GM12878 (cell line): ENCODE measurements at regions of chr5 and their contacts with region 1.

Region 1: GRCh38 chr5:157917899-157918809 is 59.2 kb upstream of the CLINT1 start:
- DNase-seq: no peak
- ATAC-seq: peak; percentile 92
- H3K4me3 ChIP-seq: no peak overlapping the region
- H3K27ac ChIP-seq: no peak overlapping the region
- H3K4me1 ChIP-seq: no peaks in the 10 kb centered on the region; the same call in 1 of the 2 replicates
- H3K27me3 ChIP-seq: no peaks in the 10 kb centered on the region
- CTCF ChIP-seq: peak; percentile 64 to 71 (median 65)
- EP300 ChIP-seq: no peak
- POLR2A ChIP-seq: no peak
- RAD21 ChIP-seq: peak; percentile 81

Region 2: DNA sequence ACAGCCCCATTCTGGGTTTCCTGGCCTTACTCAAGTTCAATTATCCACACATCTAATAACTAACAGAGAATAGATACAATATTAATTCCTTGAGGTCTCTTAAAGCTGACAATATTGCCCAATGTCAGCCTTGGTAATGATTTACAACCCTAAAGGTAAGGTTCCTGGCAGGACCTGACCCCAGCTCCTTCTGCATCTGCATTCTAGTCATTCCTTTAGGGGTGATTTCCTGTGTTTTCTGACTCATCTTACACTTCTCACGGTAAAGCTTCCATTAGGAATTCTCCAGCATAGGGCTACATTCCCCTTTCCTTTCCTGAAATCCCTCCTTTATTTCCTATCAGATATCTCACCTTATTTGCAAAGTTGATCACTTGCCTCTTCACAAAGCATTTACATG is 868.5 kb before region 1 on chr5:
- CTCF ChIA-PET with region 1: no interaction called
- POLR2A ChIA-PET with region 1: no interaction called
- RAD21 ChIA-PET with region 1: no interaction called
- SMC1A ChIA-PET with region 1: no interaction called
- in situ Hi-C with region 1: no loop called
- intact Hi-C with region 1: no loop called
- DNase-seq: no peak
- ATAC-seq: no peak
- H3K4me3 ChIP-seq: no peak overlapping the region
- H3K27ac ChIP-seq: no peak overlapping the region
- H3K4me1 ChIP-seq: no peaks in the 10 kb centered on the region
- H3K27me3 ChIP-seq: no peaks in the 10 kb centered on the region; a peak in 1 of 4 replicates
- CTCF ChIP-seq: no peak
- EP300 ChIP-seq: no peak
- POLR2A ChIP-seq: no peak
- RAD21 ChIP-seq: no peak

Region 3: DNA sequence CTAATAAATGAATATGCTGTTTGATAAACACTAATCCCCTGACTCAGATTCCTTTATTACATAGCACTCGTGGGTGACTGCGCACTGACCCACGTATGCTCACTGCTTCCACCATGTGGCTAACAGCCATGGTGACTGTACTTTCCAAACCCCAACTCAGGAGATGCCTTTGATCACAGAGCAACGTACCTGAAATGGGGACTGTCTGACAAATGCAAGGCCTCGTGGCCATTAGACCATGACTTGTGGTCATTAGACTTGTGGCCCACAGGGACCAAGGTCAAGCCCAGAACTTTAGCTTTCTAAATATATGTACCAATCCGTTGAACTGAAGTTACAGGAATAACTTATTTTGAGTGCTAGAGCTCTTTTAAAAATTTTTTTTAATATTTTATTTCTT is 605.7 kb before region 1 on chr5:
- CTCF ChIA-PET with region 1: no interaction called
- POLR2A ChIA-PET with region 1: no interaction called
- RAD21 ChIA-PET with region 1: no interaction called
- SMC1A ChIA-PET with region 1: no interaction called
- in situ Hi-C with region 1: no loop called
- intact Hi-C with region 1: no loop called
- DNase-seq: peak; percentile 59
- ATAC-seq: peak; percentile 96
- H3K4me3 ChIP-seq: no peak overlapping the region
- H3K27ac ChIP-seq: no peak overlapping the region
- H3K4me1 ChIP-seq: no peaks in the 10 kb centered on the region
- H3K27me3 ChIP-seq: no peaks in the 10 kb centered on the region
- CTCF ChIP-seq: peak; percentile 80 to 86 (median 80)
- EP300 ChIP-seq: no peak
- POLR2A ChIP-seq: no peak
- RAD21 ChIP-seq: peak; percentile 72

Region 4: DNA sequence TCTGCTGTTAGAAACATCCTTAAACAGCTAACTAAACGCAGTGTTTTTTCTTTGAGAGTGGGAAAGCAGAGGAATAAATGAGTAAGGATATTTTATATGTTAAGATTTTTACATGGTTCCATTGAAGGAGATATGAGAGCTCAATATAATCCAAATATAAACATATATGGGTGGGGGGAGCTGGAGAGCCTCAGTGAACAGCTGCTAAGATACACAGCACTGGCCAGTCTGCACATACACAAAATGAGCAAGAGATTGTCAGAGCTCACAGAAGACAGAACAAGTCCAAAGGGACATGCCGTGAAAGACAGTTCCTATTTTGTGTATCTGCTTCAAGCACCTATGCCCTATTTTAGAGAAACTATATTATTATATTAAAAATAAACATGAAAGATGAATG is 106.1 kb before region 1 on chr5:
- CTCF ChIA-PET with region 1: interaction called, 102 read pairs
- POLR2A ChIA-PET with region 1: no interaction called
- RAD21 ChIA-PET with region 1: interaction called, 11 read pairs
- SMC1A ChIA-PET with region 1: interaction called, 21 read pairs
- in situ Hi-C with region 1: no loop called
- intact Hi-C with region 1: loop called (anchors 1 kb)
- DNase-seq: no peak
- ATAC-seq: no peak
- H3K4me3 ChIP-seq: no peak overlapping the region
- H3K27ac ChIP-seq: no peak overlapping the region
- H3K4me1 ChIP-seq: no peaks in the 10 kb centered on the region
- H3K27me3 ChIP-seq: no peaks in the 10 kb centered on the region
- CTCF ChIP-seq: no peak
- EP300 ChIP-seq: no peak
- POLR2A ChIP-seq: no peak
- RAD21 ChIP-seq: no peak

Region 5: GRCh38 chr5:157828944-157829632 is 89.1 kb before region 1 on chr5:
- CTCF ChIA-PET with region 1: interaction called, 28 read pairs
- POLR2A ChIA-PET with region 1: interaction called, 3 read pairs
- RAD21 ChIA-PET with region 1: interaction called, 6 read pairs
- SMC1A ChIA-PET with region 1: interaction called, 15 read pairs
- in situ Hi-C with region 1: loop called (anchors 5 kb)
- intact Hi-C with region 1: no loop called
- DNase-seq: no peak
- ATAC-seq: peak; percentile 71
- H3K4me3 ChIP-seq: no peak overlapping the region
- H3K27ac ChIP-seq: no peak overlapping the region
- H3K4me1 ChIP-seq: peaks cover 8% of the 10 kb centered on the region
- H3K27me3 ChIP-seq: no peaks in the 10 kb centered on the region
- CTCF ChIP-seq: peak; percentile 34 to 52 (median 35); a peak in 5 of 6 replicates
- EP300 ChIP-seq: no peak
- POLR2A ChIP-seq: no peak
- RAD21 ChIP-seq: no peak